ENCODE measurements at regions of chr7 and their contacts with region 1.

Region 1: DNA sequence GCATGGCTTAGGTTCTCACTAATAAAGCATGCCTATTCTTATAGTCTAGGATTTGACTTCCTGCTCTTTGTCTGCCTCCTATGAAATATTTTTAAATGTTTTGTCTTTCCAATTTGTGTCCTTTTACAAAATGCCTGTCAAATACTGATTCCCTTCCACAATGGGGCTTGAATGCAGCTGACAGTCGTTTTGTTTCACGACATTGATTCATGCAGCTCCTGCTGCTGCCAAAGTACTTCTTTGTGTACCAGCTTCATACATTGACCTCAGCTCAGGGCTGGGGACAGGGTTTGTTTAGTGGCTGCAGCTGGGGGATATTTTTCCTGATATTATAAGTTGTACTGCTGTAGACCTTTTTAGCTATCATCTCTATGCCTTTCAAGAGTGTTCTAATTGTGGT is 371.9 kb upstream of the CHRM2 start:
- DNase-seq: no peak
- H3K4me3 ChIP-seq: no peak overlapping the region
- H3K27ac ChIP-seq: no peak overlapping the region
- H3K4me1 ChIP-seq: no peaks in the 10 kb centered on the region
- CTCF ChIP-seq: no peak

Region 2: DNA sequence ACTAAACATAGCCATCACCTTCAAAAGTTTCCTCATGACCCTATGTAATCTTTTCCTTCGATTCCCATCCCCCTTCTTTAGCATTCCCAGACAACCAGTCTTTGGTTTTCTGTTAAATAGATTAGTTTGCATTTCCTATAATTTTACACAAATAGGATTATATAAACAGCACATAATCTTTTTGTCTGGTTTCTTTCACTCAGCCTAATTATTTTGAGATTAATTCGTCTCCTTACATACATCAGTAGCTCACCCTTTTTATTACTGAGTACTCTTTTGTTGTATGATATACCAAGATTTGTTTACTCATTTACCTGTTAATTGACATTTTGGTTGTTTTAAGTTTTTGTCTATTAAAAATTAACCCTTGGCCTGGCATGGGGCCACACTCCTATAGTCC is 17.2 kb after region 1 on chr7:
- CTCF ChIA-PET with region 1: no interaction called
- POLR2A ChIA-PET with region 1: no interaction called
- intact Hi-C with region 1: loop called (anchors 1 kb)
- DNase-seq: no peak
- H3K4me3 ChIP-seq: no peak overlapping the region
- H3K27ac ChIP-seq: no peak overlapping the region
- H3K4me1 ChIP-seq: no peaks in the 10 kb centered on the region
- CTCF ChIP-seq: no peak